PC-3 (cell line): ENCODE measurements at regions of chr3 and their contacts with region 1.

Region 1: GRCh38 chr3:157136647-157137387 is 23.1 kb downstream of the CCNL1 start:
- DNase-seq: peak; percentile 63
- ATAC-seq: peak; percentile 27
- H3K4me3 ChIP-seq: no peak overlapping the region
- H3K27ac ChIP-seq: peak overlapping the region; percentile 99
- H3K4me1 ChIP-seq: peaks cover 56% of the 10 kb centered on the region
- H3K27me3 ChIP-seq: no peaks in the 10 kb centered on the region
- CTCF ChIP-seq: no peak

Region 2: DNA sequence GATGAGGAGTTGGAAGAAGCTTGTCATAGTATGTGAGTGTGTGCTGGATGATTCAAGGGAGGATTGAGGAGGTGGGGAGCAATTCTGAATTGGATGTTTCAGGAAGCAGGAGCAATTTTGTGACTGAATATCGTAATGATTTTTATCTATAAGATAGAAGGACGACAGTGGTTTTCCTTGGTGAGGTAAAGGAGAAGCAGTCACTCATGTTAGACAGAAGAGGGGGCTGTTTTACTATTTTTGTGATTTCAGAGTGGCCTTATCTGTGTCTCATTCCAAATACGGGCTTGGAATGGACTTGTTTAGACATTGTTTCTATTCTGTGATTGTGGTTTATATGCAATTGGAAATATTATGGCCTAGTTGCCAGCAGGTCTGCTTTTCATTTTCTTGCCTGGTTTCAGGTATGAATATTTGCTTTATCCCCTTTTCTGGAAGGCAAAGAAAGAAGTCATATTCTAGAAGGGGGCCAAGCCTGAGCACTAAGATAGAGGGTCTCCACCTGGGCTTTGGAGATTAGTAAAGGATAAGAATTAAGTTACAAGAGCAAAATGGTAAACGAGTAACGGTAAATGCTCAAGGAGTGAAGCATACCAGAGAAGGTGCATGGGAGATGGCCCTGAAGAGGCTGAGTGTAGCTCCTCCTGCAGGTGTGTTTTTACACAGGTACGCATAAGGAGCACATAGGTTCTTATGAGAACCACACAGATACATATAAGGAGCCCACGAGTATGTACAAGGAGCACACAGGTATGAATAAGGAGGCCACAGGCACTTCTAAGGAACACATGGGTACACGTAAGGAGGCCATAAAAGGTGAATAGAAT is 1141.1 kb before region 1 on chr3:
- CTCF ChIA-PET with region 1: no interaction called
- POLR2A ChIA-PET with region 1: no interaction called
- intact Hi-C with region 1: loop called (anchors 2 kb)
- DNase-seq: peak; percentile 67
- ATAC-seq: peak; percentile 97
- H3K4me3 ChIP-seq: no peak overlapping the region
- H3K27ac ChIP-seq: no peak overlapping the region
- H3K4me1 ChIP-seq: no peaks in the 10 kb centered on the region
- H3K27me3 ChIP-seq: no peaks in the 10 kb centered on the region
- CTCF ChIP-seq: peak; percentile 70

Region 3: GRCh38 chr3:156449712-156450574 is 686.9 kb before region 1 on chr3:
- CTCF ChIA-PET with region 1: no interaction called
- POLR2A ChIA-PET with region 1: no interaction called
- intact Hi-C with region 1: loop called (anchors 5 kb)
- DNase-seq: peak; percentile 64
- ATAC-seq: peak; percentile 88
- H3K4me3 ChIP-seq: no peak overlapping the region
- H3K27ac ChIP-seq: no peak overlapping the region
- H3K4me1 ChIP-seq: no peaks in the 10 kb centered on the region
- H3K27me3 ChIP-seq: peaks cover 23% of the 10 kb centered on the region
- CTCF ChIP-seq: peak; percentile 82

Region 4: GRCh38 chr3:156691920-156692319 is 444.9 kb before region 1 on chr3:
- CTCF ChIA-PET with region 1: interaction called, 3 read pairs
- POLR2A ChIA-PET with region 1: no interaction called
- intact Hi-C with region 1: loop called (anchors 5 kb)
- DNase-seq: peak; percentile 67
- ATAC-seq: peak; percentile 40
- H3K4me3 ChIP-seq: peak overlapping the region; percentile 1; the same call in 1 of the 2 replicates
- H3K27ac ChIP-seq: peak overlapping the region; percentile 61
- H3K4me1 ChIP-seq: peaks cover 61% of the 10 kb centered on the region
- H3K27me3 ChIP-seq: no peaks in the 10 kb centered on the region
- CTCF ChIP-seq: no peak

Region 5: DNA sequence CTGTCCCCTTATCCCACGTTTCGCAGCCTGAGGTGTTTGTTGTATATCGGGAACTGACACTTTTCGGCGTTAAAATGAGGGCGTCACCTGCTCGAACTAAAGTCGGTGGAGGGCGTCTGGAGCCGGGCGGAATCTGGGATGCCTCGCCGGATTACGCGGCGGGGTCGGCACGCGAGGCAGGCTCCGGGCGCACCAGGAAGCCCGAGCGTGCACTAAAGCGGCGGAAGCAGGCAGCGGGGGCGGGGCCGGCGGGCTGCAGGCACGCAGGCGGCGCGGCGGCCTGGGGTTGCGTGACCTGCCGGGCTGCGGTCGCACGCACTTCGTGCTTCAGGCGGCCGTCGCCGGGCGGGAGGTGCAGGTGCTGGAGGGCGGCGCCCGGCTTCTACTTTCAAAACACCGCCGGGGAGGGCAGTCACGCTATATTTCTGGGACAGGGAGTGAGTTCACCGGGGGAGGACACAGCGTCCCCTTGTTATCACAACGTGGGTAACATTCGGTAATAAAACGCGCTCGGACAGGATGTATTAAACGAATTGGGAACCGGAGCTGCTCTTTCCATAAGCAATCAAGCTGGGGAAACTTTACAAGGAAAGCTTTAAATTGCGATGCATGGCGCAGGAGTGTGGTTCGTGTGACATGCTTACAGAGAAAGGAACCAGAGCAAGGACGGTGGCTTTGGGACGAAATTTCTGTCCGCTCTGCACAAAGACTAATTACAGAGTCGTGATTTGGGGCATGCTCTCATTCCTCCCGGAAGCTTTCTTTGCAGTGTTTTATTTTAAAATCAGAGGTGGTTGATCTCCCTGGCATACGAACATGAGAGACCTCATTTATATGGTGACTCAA is 319.8 kb before region 1 on chr3:
- CTCF ChIA-PET with region 1: interaction called, 3 read pairs
- POLR2A ChIA-PET with region 1: interaction called, 4 read pairs
- intact Hi-C with region 1: loop called (anchors 2 kb)
- DNase-seq: peak; percentile 95
- ATAC-seq: peak; percentile 68
- H3K4me3 ChIP-seq: peak overlapping the region; percentile 64
- H3K27ac ChIP-seq: peak overlapping the region; percentile 98
- H3K4me1 ChIP-seq: peaks cover 65% of the 10 kb centered on the region
- H3K27me3 ChIP-seq: no peaks in the 10 kb centered on the region
- CTCF ChIP-seq: 0 out of 2 replicates have a peak, but pooled peaks have one; percentile 18

Region 6: DNA sequence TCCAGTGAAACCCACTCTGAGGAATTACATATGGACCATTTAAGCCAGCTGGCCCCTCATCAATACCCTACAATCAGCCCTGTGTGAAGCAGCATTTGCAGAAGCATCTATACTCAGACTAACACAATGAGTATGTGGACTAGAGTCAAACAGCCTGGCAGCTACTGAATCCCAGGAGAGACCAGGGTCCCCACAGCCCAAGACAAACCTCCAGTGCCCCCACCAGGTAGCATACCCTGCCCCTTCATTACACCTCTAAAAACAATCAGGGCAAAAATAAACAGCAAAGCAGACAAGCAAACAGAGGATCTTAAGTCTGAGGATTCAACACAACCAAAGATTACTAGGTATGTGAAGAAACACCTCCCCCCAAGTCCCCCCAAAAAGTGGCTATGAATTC is 153.3 kb before region 1 on chr3:
- CTCF ChIA-PET with region 1: no interaction called
- POLR2A ChIA-PET with region 1: no interaction called
- intact Hi-C with region 1: no loop called
- DNase-seq: no peak
- ATAC-seq: no peak
- H3K4me3 ChIP-seq: no peak overlapping the region
- H3K27ac ChIP-seq: no peak overlapping the region
- H3K4me1 ChIP-seq: no peaks in the 10 kb centered on the region
- H3K27me3 ChIP-seq: no peaks in the 10 kb centered on the region
- CTCF ChIP-seq: no peak